Activated naive CD4-positive, alpha-beta T cell treated with anti-CD3 and anti-CD28 coated beads for 36 hours (primary cell): ENCODE measurements at regions of chr11 and their contacts with region 1.

Region 1: GRCh38 chr11:121494355-121495099 is 41.8 kb upstream of the SORL1-AS1 start:
- DNase-seq: peak; percentile 77
- H3K4me3 Mint-ChIP-seq: peak overlapping the region; percentile 38
- H3K27ac Mint-ChIP-seq: peak overlapping the region; percentile 79
- H3K4me1 Mint-ChIP-seq: peaks cover 57% of the 10 kb centered on the region
- H3K27me3 Mint-ChIP-seq: no peaks in the 10 kb centered on the region

Region 2: DNA sequence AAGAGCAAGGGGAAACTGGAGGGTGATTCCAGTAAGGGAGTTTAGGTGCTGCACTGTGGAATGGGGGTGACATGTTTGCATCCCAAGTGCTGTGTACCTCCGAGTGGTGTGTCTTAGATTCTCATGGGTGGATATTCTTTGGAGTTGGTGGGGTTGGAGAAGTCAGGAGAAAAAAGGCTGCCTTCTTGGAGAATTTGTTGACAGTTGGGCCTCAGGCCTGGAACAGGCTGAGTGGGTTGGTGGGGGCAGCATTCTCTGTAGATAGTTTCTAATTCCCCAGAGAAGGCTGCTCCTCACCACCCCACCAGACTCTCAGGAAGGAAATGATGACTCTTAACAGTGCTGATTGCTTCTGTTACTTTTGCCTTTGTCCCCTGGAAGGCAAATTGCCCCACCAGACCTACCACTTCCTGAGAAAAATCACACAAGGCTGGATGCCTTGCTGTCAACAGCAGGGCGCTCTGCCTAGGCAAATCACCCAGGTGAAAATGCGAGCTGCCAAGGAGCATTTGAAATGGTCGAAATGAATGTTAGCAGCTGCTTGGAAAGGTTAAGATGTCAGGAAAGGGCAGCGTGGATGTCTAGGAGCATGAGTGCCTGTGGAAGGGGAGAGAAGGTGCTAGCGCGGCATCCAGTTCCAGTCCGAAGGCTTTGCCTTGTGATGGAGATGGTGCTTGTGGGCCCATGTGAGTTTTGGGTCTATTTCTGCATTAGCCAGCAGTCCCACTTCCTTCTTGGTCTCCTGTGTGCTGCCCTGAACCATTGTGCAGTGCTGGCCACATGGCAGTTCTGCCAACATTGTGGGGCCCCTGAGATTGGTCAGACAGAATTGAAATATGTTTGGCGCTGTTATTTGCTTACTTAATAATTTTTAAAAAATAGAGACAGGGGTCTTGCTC is 12.0 kb before region 1 on chr11:
- CTCF ChIA-PET with region 1: interaction called, 7 read pairs
- intact Hi-C with region 1: loop called (anchors 1 kb)
- DNase-seq: peak; percentile 80
- H3K4me3 Mint-ChIP-seq: peak overlapping the region; percentile 88
- H3K27ac Mint-ChIP-seq: peak overlapping the region; percentile 98
- H3K4me1 Mint-ChIP-seq: peaks cover 39% of the 10 kb centered on the region
- H3K27me3 Mint-ChIP-seq: no peaks in the 10 kb centered on the region